Right ventricle myocardium inferior (tissue), 1 donor: ENCODE measurements at regions of chr1 and their contacts with region 1.

Region 1: GRCh38 chr1:6401673-6402072 is 8.1 kb upstream of the ACOT7 start:
- DNase-seq: no peak
- ATAC-seq: no peak

Region 2: DNA sequence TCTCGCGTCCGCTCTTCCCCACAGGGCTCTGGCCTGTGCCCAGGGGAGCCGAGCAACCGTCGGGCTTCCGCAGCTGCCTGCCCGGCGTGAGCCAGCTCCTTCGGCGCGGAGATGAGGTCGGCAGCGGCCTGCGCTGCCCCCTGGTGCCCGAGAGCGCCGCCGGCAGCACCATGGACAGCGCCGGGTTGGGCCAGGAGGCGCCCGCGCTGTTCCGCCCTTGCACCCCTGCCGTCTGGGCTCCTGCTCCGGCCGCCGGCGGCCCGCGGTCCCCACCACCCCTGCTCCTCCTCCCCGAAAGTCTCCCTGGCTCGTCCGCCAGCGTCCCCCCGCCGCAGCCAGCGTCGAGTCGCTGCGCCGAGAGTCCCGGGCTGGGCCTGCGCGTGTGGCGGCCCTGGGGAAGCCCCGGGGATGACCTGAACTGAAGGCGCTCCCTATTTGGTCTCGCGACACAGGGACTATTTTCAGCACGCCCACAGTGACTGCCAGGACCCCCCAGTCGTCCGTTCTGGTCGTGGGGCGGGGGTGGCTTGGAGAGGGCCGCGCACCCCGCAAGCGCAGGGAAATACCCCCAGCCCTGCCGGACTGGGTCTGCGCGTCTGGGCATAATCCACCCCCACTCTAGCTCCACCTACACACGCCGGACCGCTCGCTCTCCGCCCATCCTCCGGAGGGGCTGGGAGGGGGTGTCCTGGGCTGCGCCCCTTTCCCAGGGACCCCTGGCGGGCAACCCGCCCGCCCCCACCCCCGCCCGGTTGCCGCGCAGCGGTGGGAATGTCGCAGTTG is 156.4 kb before region 1 on chr1:
- intact Hi-C with region 1: loop called (anchors 2 kb)
- DNase-seq: peak; percentile 88
- ATAC-seq: peak; percentile 78

Region 3: GRCh38 chr1:6343506-6344405 is 57.9 kb before region 1 on chr1:
- intact Hi-C with region 1: loop called (anchors 1 kb)
- DNase-seq: no peak
- ATAC-seq: peak; percentile 81

Region 4: GRCh38 chr1:6359216-6360116 is 42.2 kb before region 1 on chr1:
- intact Hi-C with region 1: loop called (anchors 2 kb)
- DNase-seq: peak; percentile 83
- ATAC-seq: peak; percentile 78